GM12878 (cell line): ENCODE measurements at regions of chr14 and their contacts with region 1.

Region 1: GRCh38 chr14:33499687-33500086 is 451.2 kb downstream of the EGLN3 start:
- DNase-seq: no peak
- ATAC-seq: no peak
- H3K4me3 ChIP-seq: no peak overlapping the region
- H3K27ac ChIP-seq: no peak overlapping the region
- H3K4me1 ChIP-seq: no peaks in the 10 kb centered on the region
- H3K27me3 ChIP-seq: no peaks in the 10 kb centered on the region; a peak in 1 of 4 replicates
- CTCF ChIP-seq: no peak
- EP300 ChIP-seq: no peak
- POLR2A ChIP-seq: no peak
- RAD21 ChIP-seq: no peak

Region 2: DNA sequence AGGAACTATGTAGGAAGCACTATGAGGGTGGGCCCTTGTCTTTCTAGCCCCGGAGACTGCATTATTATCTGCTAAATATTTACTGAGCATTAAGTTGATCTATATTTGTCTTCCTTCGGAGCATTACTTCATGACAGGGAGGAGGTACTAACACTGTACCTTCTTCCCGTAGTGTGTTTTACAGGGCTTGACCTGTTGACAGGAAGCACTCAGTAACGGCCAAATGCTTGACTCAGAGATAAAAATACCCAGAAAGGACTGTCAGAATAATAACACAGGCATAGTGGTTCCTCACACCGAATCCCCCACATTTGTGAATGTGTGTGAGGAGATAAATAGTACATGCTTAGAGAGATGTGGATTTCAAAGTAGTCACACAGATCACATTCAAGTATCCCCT is 15.4 kb before region 1 on chr14:
- CTCF ChIA-PET with region 1: interaction called, 14 read pairs
- POLR2A ChIA-PET with region 1: interaction called, 5 read pairs
- RAD21 ChIA-PET with region 1: interaction called, 26 read pairs
- SMC1A ChIA-PET with region 1: interaction called, 120 read pairs
- in situ Hi-C with region 1: no loop called
- intact Hi-C with region 1: no loop called
- DNase-seq: no peak
- ATAC-seq: peak; percentile 43; the same call in 2 of the 3 replicates
- H3K4me3 ChIP-seq: no peak overlapping the region
- H3K27ac ChIP-seq: no peak overlapping the region
- H3K4me1 ChIP-seq: no peaks in the 10 kb centered on the region
- H3K27me3 ChIP-seq: peaks cover 0 to 4% of the 10 kb centered on the region in 2 experiments; a peak in 1 of 4 replicates
- CTCF ChIP-seq: no peak
- EP300 ChIP-seq: no peak
- POLR2A ChIP-seq: no peak
- RAD21 ChIP-seq: no peak

Region 3: GRCh38 chr14:33524244-33524643 is 24.6 kb after region 1 on chr14:
- CTCF ChIA-PET with region 1: no interaction called
- POLR2A ChIA-PET with region 1: interaction called, 5 read pairs
- RAD21 ChIA-PET with region 1: no interaction called
- SMC1A ChIA-PET with region 1: interaction called, 11 read pairs
- in situ Hi-C with region 1: no loop called
- intact Hi-C with region 1: no loop called
- DNase-seq: no peak
- ATAC-seq: peak; percentile 79
- H3K4me3 ChIP-seq: no peak overlapping the region
- H3K27ac ChIP-seq: no peak overlapping the region
- H3K4me1 ChIP-seq: no peaks in the 10 kb centered on the region
- H3K27me3 ChIP-seq: no peaks in the 10 kb centered on the region; a peak in 1 of 4 replicates
- CTCF ChIP-seq: no peak
- EP300 ChIP-seq: no peak; a peak in 1 of 4 replicates
- POLR2A ChIP-seq: no peak
- RAD21 ChIP-seq: no peak

Region 4: GRCh38 chr14:33584697-33585096 is 85.0 kb after region 1 on chr14:
- CTCF ChIA-PET with region 1: no interaction called
- POLR2A ChIA-PET with region 1: no interaction called
- RAD21 ChIA-PET with region 1: no interaction called
- SMC1A ChIA-PET with region 1: no interaction called
- in situ Hi-C with region 1: no loop called
- intact Hi-C with region 1: no loop called
- DNase-seq: no peak
- ATAC-seq: no peak
- H3K4me3 ChIP-seq: no peak overlapping the region
- H3K27ac ChIP-seq: no peak overlapping the region
- H3K4me1 ChIP-seq: no peaks in the 10 kb centered on the region
- H3K27me3 ChIP-seq: no peaks in the 10 kb centered on the region; a peak in 1 of 4 replicates
- CTCF ChIP-seq: no peak
- EP300 ChIP-seq: no peak
- POLR2A ChIP-seq: no peak
- RAD21 ChIP-seq: no peak

Region 5: DNA sequence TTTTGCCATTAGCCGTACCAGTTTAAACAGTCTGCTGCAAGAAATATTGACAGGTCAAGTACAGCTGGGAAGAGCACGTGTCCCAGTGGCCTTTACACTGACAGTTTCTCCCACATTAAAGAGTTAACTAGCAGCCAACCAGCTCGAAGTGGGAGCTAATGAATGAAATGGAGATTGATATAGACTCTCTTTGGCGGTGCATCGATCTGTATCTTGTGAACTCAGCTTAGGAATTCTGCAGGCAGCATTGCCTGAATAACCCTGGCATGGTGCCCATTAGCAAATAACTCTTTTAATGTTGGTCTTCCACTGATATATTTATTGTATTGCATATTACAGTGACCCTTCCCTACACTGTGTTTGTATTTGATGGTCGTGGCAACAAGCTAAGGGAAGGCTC is 131.8 kb after region 1 on chr14:
- CTCF ChIA-PET with region 1: no interaction called
- POLR2A ChIA-PET with region 1: no interaction called
- RAD21 ChIA-PET with region 1: no interaction called
- SMC1A ChIA-PET with region 1: no interaction called
- in situ Hi-C with region 1: no loop called
- intact Hi-C with region 1: no loop called
- DNase-seq: no peak
- ATAC-seq: no peak
- H3K4me3 ChIP-seq: no peak overlapping the region
- H3K27ac ChIP-seq: no peak overlapping the region
- H3K4me1 ChIP-seq: no peaks in the 10 kb centered on the region
- H3K27me3 ChIP-seq: no peaks in the 10 kb centered on the region
- CTCF ChIP-seq: no peak
- EP300 ChIP-seq: no peak
- POLR2A ChIP-seq: no peak
- RAD21 ChIP-seq: no peak